A549 (cell line): ENCODE measurements at regions of chr6 and their contacts with region 1.

Region 1: GRCh38 chr6:26031595-26032339 is 55.5 kb upstream of the HFE start:
- DNase-seq: peak; percentile 86 to 97
- ATAC-seq: peak; percentile 68 to 78
- H3K4me3 ChIP-seq: peak overlapping the region; percentile 56
- H3K27ac ChIP-seq: peak overlapping the region; percentile 95 to 100
- H3K4me1 ChIP-seq: peaks cover 38% of the 10 kb centered on the region
- CTCF ChIP-seq: no peak
- EP300 ChIP-seq: no peak
- POLR2A ChIP-seq: peak; percentile 96
- RAD21 ChIP-seq: no peak

Region 2: GRCh38 chr6:25959890-25960536 is 71.8 kb before region 1 on chr6:
- CTCF ChIA-PET with region 1: no interaction called
- POLR2A ChIA-PET with region 1: no interaction called
- DNase-seq: no peak
- ATAC-seq: no peak
- H3K4me3 ChIP-seq: no peak overlapping the region
- H3K27ac ChIP-seq: no peak overlapping the region
- H3K4me1 ChIP-seq: peaks cover 11% of the 10 kb centered on the region; the same call in 2 of the 3 replicates
- CTCF ChIP-seq: no peak
- EP300 ChIP-seq: no peak
- POLR2A ChIP-seq: no peak
- RAD21 ChIP-seq: no peak

Region 3: DNA sequence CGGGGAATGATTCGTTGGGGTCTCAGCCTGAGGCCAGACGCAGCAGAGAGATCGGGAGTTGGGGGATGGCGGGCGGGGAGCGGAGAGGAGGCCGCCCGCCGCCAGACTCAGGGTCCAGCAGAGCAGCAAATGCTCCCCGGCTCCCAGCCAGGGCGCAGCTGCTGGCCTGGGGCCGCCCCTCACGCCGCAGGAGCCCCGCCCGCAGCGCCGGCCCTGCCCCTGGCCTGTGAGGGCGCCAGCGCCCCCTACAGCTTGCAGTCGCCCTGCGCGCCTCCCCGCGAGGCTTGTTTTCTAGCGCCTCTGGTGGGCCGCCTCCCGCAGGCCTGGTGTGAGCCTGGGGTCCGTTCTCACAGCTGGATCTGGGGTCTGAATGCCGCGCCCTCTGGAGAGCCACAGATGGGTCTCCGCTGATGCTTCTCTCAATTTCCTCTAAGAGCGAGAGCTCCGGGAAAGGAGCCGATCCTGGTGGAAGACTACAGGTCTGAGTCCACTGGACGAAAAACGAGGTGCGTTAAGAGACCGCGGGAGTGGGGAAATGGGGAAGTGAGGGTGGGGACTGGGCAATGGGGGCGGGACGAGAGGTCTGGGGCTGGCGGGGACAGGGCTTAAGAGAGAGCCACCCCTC is 39.2 kb before region 1 on chr6:
- CTCF ChIA-PET with region 1: interaction called, 7 read pairs
- POLR2A ChIA-PET with region 1: interaction called, 17 read pairs
- DNase-seq: peak; percentile 68 to 90
- ATAC-seq: peak; percentile 93 to 94
- H3K4me3 ChIP-seq: peak overlapping the region; percentile 52
- H3K27ac ChIP-seq: peak overlapping the region; percentile 93 to 95
- H3K4me1 ChIP-seq: peaks cover 11% of the 10 kb centered on the region
- CTCF ChIP-seq: peak; percentile 94
- EP300 ChIP-seq: no peak
- POLR2A ChIP-seq: peak; percentile 90
- RAD21 ChIP-seq: peak; percentile 32 to 61; a peak in 4 of 5 replicates

Region 4: DNA sequence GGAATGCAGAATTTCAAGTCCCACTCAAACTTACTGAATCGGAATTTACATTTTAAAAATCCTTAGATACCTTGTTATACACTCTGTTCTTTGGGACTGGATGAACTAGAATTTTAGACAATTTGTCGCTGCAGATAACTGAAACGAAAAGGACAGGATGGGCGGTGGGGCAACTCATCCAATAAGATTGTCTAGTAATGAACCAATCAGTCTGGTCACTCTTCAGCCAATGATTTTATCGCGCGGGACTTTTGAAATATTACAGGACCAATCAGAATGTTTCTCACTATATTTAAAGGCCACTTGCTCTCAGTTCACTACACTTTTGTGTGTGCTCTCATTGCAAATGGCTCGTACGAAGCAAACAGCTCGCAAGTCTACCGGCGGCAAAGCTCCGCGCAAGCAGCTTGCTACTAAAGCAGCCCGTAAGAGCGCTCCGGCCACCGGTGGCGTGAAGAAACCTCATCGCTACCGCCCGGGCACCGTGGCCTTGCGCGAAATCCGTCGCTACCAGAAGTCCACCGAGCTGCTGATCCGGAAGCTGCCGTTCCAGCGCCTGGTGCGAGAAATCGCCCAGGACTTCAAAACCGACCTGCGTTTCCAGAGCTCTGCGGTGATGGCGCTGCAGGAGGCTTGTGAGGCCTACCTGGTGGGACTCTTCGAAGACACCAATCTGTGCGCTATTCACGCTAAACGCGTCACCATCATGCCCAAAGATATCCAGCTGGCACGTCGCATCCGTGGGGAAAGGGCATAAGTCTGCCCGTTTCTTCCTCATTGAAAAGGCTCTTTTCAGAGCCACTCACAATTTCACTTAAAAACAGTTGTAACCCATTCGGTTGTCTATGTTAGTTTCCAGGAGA is 13.5 kb after region 1 on chr6:
- CTCF ChIA-PET with region 1: interaction called, 24 read pairs
- POLR2A ChIA-PET with region 1: interaction called, 238 read pairs
- DNase-seq: peak; percentile 55 to 86
- ATAC-seq: peak; percentile 67 to 77
- H3K4me3 ChIP-seq: peak overlapping the region; percentile 40
- H3K27ac ChIP-seq: peak overlapping the region; percentile 81 to 89
- H3K4me1 ChIP-seq: 0 out of 3 replicates have a peak, but pooled peaks cover 11% of the 10 kb centered on the region
- CTCF ChIP-seq: no peak
- EP300 ChIP-seq: no peak
- POLR2A ChIP-seq: peak; percentile 83
- RAD21 ChIP-seq: no peak

Region 5: GRCh38 chr6:26054857-26055669 is 23.3 kb after region 1 on chr6:
- CTCF ChIA-PET with region 1: interaction called, 4 read pairs
- POLR2A ChIA-PET with region 1: interaction called, 238 read pairs
- DNase-seq: peak; percentile 70 to 91
- ATAC-seq: peak; percentile 68 to 83
- H3K4me3 ChIP-seq: peak overlapping the region; percentile 76
- H3K27ac ChIP-seq: peak overlapping the region; percentile 95 to 100
- H3K4me1 ChIP-seq: peaks cover 19% of the 10 kb centered on the region
- CTCF ChIP-seq: no peak
- EP300 ChIP-seq: no peak
- POLR2A ChIP-seq: peak; percentile 66
- RAD21 ChIP-seq: no peak; a peak in 1 of 5 replicates

Region 6: DNA sequence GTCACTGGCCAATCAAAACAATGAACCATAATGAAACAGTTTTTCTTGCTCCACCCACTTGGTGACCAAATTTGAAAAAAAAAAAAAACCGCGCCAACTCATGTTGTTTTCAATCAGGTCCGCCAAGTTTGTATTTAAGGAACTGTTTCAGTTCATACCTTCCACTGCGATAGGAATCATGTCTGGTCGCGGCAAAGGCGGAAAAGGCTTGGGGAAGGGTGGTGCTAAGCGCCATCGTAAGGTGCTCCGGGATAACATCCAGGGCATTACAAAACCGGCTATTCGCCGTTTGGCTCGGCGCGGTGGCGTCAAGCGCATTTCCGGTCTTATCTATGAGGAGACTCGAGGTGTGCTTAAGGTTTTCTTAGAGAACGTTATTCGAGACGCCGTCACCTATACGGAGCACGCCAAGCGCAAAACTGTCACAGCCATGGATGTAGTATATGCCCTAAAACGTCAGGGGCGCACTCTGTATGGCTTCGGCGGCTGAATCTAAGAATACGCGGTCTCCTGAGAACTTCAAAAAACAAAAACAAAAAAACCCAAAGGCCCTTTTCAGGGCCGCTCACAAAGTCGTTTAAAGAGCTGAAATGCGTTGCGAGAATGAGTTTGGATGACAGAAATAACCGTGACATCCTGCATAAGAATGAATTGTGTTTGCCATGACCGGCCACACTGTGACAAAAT is 72.1 kb after region 1 on chr6:
- CTCF ChIA-PET with region 1: interaction called, 4 read pairs
- POLR2A ChIA-PET with region 1: interaction called, 36 read pairs
- DNase-seq: peak; percentile 57 to 93
- ATAC-seq: peak; percentile 88 to 93
- H3K4me3 ChIP-seq: peak overlapping the region; percentile 43
- H3K27ac ChIP-seq: peak overlapping the region; percentile 87 to 92
- H3K4me1 ChIP-seq: peaks cover 19% of the 10 kb centered on the region
- CTCF ChIP-seq: peak; percentile 18; the same call in 2 of the 3 replicates
- EP300 ChIP-seq: peak; percentile 51 to 56; a peak in 2 of 5 replicates
- POLR2A ChIP-seq: peak; percentile 99
- RAD21 ChIP-seq: 0 out of 5 replicates have a peak, but pooled peaks have one; percentile 11 to 14

Region 7: GRCh38 chr6:26196846-26197648 is 165.3 kb after region 1 on chr6:
- CTCF ChIA-PET with region 1: no interaction called
- POLR2A ChIA-PET with region 1: interaction called, 10 read pairs
- DNase-seq: no peak
- ATAC-seq: no peak
- H3K4me3 ChIP-seq: no peak overlapping the region
- H3K27ac ChIP-seq: peak overlapping the region in 1 of 2 experiments; percentile 90; a peak in 3 of 6 replicates
- H3K4me1 ChIP-seq: no peaks in the 10 kb centered on the region; the same call in 2 of the 3 replicates
- CTCF ChIP-seq: no peak
- EP300 ChIP-seq: no peak
- POLR2A ChIP-seq: no peak
- RAD21 ChIP-seq: no peak